Activated naive CD4-positive, alpha-beta T cell treated with anti-CD3 and anti-CD28 coated beads for 36 hours (primary cell): ENCODE measurements at regions of chr14 and their contacts with region 1.

Region 1: GRCh38 chr14:65222440-65222858 is 120.1 kb upstream of the MAX start:
- DNase-seq: peak; percentile 74
- H3K4me3 Mint-ChIP-seq: no peak overlapping the region
- H3K27ac Mint-ChIP-seq: no peak overlapping the region
- H3K4me1 Mint-ChIP-seq: peaks cover 28% of the 10 kb centered on the region
- H3K27me3 Mint-ChIP-seq: no peaks in the 10 kb centered on the region

Region 2: GRCh38 chr14:65287264-65288131 is 65.0 kb after region 1 on chr14:
- CTCF ChIA-PET with region 1: interaction called, 3 read pairs
- intact Hi-C with region 1: loop called (anchors 2 kb)
- DNase-seq: peak; percentile 66
- H3K4me3 Mint-ChIP-seq: peak overlapping the region; percentile 74
- H3K27ac Mint-ChIP-seq: peak overlapping the region; percentile 98
- H3K4me1 Mint-ChIP-seq: peaks cover 64% of the 10 kb centered on the region
- H3K27me3 Mint-ChIP-seq: no peaks in the 10 kb centered on the region

Region 3: GRCh38 chr14:65356327-65356852 is 133.9 kb after region 1 on chr14:
- CTCF ChIA-PET with region 1: interaction called, 8 read pairs
- intact Hi-C with region 1: loop called (anchors 5 kb)
- DNase-seq: peak; percentile 77
- H3K4me3 Mint-ChIP-seq: no peak overlapping the region
- H3K27ac Mint-ChIP-seq: peak overlapping the region; percentile 63
- H3K4me1 Mint-ChIP-seq: peaks cover 44% of the 10 kb centered on the region
- H3K27me3 Mint-ChIP-seq: no peaks in the 10 kb centered on the region

Region 4: DNA sequence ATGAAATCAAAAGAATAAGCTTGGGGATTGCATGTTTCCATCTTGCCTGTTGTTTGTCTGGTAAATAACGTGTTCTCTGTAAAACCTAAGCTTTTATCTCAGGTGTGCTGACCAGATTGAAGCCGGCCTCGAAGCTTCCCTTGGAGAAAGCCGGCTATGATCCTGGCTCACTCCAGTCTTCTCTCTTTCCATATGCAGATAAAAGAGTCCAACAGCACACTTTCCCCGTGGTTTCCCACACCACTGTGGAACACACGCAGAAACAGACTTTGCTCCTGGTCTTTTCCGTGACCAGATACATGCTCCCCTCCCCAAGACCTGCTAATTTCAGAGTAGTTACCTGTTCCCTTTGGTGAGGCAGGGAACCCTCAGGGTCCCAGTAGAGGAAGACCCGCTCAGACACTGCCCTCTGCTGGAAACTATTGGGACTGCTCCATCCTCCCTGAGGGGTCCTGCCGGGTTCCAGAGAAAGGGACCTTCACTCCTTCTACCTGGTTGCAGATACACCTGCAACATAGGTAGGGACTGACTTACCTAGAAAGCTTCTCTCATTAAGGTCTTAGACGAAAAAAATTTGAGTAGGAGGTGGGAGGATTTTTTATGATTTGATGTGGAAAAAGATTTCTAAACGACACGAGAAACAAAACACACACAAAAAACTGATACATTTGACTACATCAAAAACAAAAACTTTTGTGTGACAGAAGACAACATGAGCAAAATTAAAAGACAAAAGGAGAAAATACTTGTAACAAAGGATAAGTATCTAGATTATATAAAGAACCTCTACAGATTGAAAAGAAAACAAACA is 848.3 kb after region 1 on chr14:
- CTCF ChIA-PET with region 1: no interaction called
- intact Hi-C with region 1: loop called (anchors 5 kb)
- DNase-seq: peak; percentile 73
- H3K4me3 Mint-ChIP-seq: no peak overlapping the region
- H3K27ac Mint-ChIP-seq: no peak overlapping the region
- H3K4me1 Mint-ChIP-seq: no peaks in the 10 kb centered on the region
- H3K27me3 Mint-ChIP-seq: no peaks in the 10 kb centered on the region